Activated CD4-positive, alpha-beta memory T cell treated with anti-CD3 and anti-CD28 coated beads for 36 hours (primary cell): ENCODE measurements at regions of chr7 and their contacts with region 1.

Region 1: GRCh38 chr7:143240291-143241168 is 18.7 kb downstream of the TAS2R40 start:
- DNase-seq: peak; percentile 81
- H3K4me3 Mint-ChIP-seq: peak overlapping the region; percentile 45
- H3K27ac Mint-ChIP-seq: peak overlapping the region; percentile 73
- H3K4me1 Mint-ChIP-seq: peaks cover 30% of the 10 kb centered on the region
- H3K27me3 Mint-ChIP-seq: peaks cover 3% of the 10 kb centered on the region

Region 2: DNA sequence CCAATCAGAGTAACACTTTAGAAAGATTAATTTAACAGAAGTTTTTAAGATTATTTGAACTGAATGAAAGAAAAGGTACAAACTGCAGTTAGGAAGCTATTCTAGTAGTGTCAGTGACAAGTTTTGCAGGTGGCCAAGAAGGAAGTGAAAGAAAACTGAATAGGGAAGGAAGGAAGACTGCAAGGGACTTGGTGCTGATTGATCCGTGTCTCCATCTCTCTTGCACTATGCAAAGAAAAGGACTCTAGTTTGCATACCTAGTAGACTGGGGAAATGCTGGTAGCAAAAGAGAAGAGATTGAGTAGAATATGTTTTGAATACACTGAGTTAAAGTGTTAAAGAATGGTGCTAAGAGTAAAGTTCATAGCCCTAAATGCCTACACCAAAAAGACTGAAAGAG is 155.4 kb before region 1 on chr7:
- CTCF ChIA-PET with region 1: no interaction called
- POLR2A ChIA-PET with region 1: no interaction called
- intact Hi-C with region 1: no loop called
- DNase-seq: no peak
- H3K4me3 Mint-ChIP-seq: no peak overlapping the region
- H3K27ac Mint-ChIP-seq: no peak overlapping the region
- H3K4me1 Mint-ChIP-seq: no peaks in the 10 kb centered on the region
- H3K27me3 Mint-ChIP-seq: peaks cover 13% of the 10 kb centered on the region

Region 3: DNA sequence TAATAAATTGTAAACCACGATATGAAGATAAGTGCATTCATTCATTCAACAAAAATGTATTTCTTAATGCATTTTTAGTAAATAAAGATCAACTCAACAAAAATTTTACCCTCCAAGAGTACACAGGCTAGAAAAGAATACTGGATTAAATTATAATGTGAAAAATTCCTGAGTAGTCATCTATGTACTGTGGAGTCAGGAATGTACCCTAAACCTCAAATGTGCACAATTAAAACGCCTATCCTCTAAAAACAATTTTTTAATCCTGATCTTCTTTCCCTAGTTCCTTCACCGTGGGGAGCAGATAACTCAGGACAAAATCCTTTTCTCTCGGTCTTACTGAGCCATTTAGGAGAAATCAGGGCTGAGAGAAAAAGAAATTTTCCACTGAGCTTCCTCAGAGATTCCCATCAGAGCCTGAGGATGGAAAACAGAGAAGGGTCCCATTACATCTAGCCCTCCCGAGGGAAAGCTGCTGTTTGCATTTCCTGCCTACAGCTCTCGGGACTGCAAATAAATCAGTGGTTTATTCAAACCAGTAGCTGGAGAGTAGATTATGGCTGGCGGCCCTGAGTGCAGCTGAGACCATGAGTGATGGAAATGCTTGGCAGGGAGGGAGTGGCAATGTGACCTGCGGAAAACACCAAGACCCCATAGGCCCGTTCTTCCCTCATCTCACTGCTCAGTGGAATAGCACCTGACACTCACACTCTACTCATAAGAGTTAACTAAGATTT is 11.3 kb before region 1 on chr7:
- CTCF ChIA-PET with region 1: interaction called, 11 read pairs
- POLR2A ChIA-PET with region 1: no interaction called
- intact Hi-C with region 1: no loop called
- DNase-seq: no peak
- H3K4me3 Mint-ChIP-seq: no peak overlapping the region
- H3K27ac Mint-ChIP-seq: no peak overlapping the region
- H3K4me1 Mint-ChIP-seq: no peaks in the 10 kb centered on the region
- H3K27me3 Mint-ChIP-seq: no peaks in the 10 kb centered on the region

Region 4: GRCh38 chr7:143287935-143288826 is 47.7 kb after region 1 on chr7 and contains the start of gene CASP2:
- CTCF ChIA-PET with region 1: interaction called, 53 read pairs
- POLR2A ChIA-PET with region 1: interaction called, 10 read pairs
- intact Hi-C with region 1: loop called (anchors 1 kb)
- DNase-seq: peak; percentile 99
- H3K4me3 Mint-ChIP-seq: peak within 1 kb of the TSS; percentile 93
- H3K27ac Mint-ChIP-seq: peak within 1 kb of the TSS; percentile 97
- H3K4me1 Mint-ChIP-seq: peaks cover 44% of the 10 kb centered on the region
- H3K27me3 Mint-ChIP-seq: no peaks in the 10 kb centered on the region
- total RNA-seq, gene CASP2: 117 to 129 TPM

Region 5: GRCh38 chr7:143345428-143345900 is 104.9 kb after region 1 on chr7:
- CTCF ChIA-PET with region 1: interaction called, 22 read pairs
- POLR2A ChIA-PET with region 1: interaction called, 3 read pairs
- intact Hi-C with region 1: no loop called
- DNase-seq: peak; percentile 81
- H3K4me3 Mint-ChIP-seq: peak overlapping the region; percentile 65
- H3K27ac Mint-ChIP-seq: no peak overlapping the region
- H3K4me1 Mint-ChIP-seq: peaks cover 15% of the 10 kb centered on the region
- H3K27me3 Mint-ChIP-seq: no peaks in the 10 kb centered on the region

Region 6: DNA sequence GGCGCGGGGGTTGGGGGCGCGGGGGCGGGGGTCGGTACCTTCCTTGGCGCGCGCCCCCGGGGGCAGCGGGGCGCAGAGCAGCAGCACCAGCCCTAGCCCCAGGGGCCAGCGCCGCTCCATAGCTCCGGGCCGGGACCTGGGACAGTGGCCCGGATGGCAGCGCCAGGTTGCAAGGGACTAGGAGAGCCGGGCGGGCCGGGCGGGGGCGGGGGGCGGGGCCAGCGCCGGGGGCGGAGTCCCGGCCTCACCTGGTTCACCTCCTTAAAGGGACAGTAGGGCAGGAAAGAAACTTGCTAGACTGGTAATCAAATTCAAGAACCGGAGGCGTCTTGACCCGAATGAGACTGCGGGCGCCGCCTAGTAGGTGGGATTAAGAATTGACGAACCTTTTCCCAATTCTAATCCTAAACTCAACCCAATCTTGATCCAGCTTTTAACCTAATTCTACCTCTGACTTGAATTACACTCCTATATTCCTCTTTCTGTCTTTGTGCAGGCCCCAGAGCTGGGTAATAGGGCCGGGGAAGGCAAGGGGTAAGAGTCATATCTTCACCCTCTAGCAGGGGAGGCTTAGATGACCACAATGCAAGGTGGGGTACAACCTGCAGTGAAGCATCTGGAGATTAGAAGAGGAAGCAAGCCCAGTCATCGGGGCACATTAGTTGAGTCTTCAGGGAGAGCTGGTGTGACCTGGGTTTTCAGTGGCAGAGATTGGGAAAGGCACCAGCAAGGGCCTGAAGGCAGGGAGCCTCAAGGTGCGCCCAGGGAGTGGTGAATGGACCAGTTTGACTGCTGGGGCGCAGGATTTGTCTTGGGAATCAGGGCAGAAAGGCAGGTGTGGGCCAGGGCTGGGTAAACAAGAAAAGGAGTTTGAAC is 168.4 kb after region 1 on chr7 and contains the start of gene EPHA1:
- CTCF ChIA-PET with region 1: interaction called, 28 read pairs
- POLR2A ChIA-PET with region 1: no interaction called
- intact Hi-C with region 1: loop called (anchors 2 kb)
- DNase-seq: peak; percentile 63
- H3K4me3 Mint-ChIP-seq: peak within 1 kb of the TSS; percentile 70
- H3K27ac Mint-ChIP-seq: peak within 1 kb of the TSS; percentile 75
- H3K4me1 Mint-ChIP-seq: peaks cover 48% of the 10 kb centered on the region
- H3K27me3 Mint-ChIP-seq: no peaks in the 10 kb centered on the region
- total RNA-seq, gene EPHA1: 2.9 to 4.3 TPM